Activated T-helper 1 cell treated with anti-CD3 and anti-CD28 coated beads, Interleukin-12 subunit alpha, Interleukin-12 subunit beta, Interleukin-2, Interleukin-4 antibody, amounts not matched to agents 30 ng/mL and 10 ng/mL and 1 ng/mL, durations not matched to agents 14 hours and 24 hours and 36 hours (primary cell): ENCODE measurements at regions of chr3 and their contacts with region 1.

Region 1: DNA sequence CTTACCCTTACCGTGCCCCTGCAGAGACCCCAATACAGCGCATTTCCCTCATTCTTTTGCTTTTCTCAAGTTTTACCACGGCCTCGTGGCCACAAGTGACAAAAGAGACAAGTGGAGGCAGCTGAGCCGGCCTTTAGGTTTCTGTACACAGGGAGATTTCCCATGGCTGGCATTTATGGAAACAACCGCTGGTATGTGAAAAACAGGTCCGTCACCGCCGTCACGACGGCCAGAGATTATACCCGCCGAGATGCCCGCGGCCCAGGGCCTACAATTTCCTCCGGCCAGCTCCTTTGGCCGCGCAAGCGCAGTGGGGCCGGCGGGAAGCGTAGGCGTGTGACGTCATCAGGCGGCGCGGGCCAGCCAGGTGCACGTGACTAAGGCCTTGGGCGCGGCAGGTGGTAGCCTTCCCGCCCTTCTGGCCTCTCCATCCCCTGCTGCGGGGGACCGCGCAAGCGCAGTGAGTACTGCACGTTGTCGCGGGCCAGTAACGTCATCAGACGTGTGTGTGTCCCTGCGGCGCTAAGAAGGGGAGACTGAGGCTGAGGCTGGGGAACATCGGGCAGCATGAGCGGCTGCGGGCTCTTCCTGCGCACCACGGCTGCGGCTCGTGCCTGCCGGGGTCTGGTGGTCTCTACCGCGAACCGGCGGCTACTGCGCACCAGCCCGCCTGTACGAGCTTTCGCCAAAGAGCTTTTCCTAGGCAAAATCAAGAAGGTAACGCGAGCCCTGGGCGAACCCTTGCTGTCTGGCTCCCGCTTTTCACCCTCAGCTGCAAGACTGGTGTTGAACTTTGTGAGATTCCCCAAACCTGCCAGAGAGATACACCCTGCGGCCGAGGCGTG is at the start of gene ACAD9:
- DNase-seq: peak; percentile 98
- H3K4me3 Mint-ChIP-seq: peak within 1 kb of the TSS; percentile 88
- H3K27ac Mint-ChIP-seq: peak within 1 kb of the TSS; percentile 92
- H3K4me1 Mint-ChIP-seq: peaks cover 71% of the 10 kb centered on the region
- H3K27me3 Mint-ChIP-seq: no peaks in the 10 kb centered on the region
- total RNA-seq, gene ACAD9: 65.3 and 67.2 TPM in 2 replicates

Region 2: DNA sequence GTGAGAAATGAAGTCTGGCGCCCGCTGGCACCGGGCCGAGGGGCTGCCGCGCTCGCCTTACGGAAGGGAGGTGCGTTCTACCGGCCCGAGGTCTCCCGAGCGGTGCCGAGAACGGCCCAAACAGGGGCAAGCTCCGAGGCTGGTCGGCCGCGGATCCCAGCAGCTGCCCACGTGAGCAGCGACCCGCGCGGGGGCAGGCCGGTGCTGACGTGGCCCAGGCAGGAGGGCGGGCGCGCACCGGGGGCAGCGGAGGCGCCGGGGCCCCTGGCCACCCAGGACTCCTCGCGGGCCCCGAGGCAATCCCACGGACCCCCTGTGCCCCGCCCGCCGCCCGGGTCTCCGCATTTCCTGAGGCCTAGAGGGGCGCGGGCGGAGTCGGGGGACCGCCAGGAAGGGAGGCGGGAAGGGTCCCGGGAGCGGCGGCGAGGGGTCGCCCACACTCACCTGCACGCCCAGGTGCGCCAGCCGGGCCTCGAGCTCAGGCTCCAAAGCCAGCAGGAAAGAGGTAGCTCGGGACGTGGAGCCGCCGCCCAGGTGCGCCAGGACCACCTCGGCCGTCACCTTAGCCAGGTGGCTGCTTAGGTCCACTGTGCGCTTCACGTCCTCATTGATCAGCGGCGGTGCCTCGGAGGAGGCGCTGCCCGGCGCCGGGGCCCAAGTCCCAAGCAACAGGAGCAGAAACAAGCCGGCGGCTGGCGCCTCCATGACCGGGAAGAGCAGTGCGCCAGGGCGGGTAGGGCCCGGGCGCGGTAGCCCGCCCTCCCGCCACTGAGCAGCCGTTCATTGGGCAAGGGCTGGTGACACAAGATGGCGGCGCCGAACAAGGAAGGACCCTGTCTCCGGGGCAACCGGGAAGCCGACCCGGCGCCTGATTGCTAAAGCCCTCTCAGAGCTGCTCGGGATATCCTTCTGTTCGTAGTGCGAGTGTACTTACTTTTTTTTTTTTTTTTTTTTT is 229.0 kb before region 1 on chr3 and contains the start of gene RPN1:
- intact Hi-C with region 1: loop called (anchors 1 kb)
- DNase-seq: peak; percentile 94
- H3K4me3 Mint-ChIP-seq: peak within 1 kb of the TSS; percentile 90
- H3K27ac Mint-ChIP-seq: peak within 1 kb of the TSS; percentile 92
- H3K4me1 Mint-ChIP-seq: peaks cover 26% of the 10 kb centered on the region
- H3K27me3 Mint-ChIP-seq: no peaks in the 10 kb centered on the region
- total RNA-seq, gene RPN1: 190 and 194 TPM in 2 replicates

Region 3: DNA sequence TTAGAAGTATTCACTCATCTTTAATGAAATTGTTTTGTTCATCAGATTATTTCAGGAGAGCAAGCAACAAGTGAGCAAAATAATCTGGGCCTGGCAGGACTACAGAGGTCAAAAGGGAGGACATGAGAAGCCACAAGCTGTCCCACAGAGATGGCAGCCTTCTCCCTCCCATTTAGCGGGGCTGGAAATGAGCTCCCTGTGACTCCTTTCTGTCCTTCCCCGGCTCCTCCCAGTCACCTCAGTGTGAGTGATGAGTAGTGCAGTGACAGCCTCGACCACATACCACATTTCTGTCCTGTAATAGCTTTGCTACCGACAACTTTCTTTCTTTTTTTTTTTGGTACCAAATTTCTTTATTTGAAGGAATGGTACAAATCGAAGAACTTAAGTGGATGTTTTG is 115.4 kb before region 1 on chr3:
- intact Hi-C with region 1: no loop called
- DNase-seq: no peak
- H3K4me3 Mint-ChIP-seq: no peak overlapping the region
- H3K27ac Mint-ChIP-seq: peak overlapping the region; percentile 18
- H3K4me1 Mint-ChIP-seq: peaks cover 44% of the 10 kb centered on the region
- H3K27me3 Mint-ChIP-seq: no peaks in the 10 kb centered on the region

Region 4: DNA sequence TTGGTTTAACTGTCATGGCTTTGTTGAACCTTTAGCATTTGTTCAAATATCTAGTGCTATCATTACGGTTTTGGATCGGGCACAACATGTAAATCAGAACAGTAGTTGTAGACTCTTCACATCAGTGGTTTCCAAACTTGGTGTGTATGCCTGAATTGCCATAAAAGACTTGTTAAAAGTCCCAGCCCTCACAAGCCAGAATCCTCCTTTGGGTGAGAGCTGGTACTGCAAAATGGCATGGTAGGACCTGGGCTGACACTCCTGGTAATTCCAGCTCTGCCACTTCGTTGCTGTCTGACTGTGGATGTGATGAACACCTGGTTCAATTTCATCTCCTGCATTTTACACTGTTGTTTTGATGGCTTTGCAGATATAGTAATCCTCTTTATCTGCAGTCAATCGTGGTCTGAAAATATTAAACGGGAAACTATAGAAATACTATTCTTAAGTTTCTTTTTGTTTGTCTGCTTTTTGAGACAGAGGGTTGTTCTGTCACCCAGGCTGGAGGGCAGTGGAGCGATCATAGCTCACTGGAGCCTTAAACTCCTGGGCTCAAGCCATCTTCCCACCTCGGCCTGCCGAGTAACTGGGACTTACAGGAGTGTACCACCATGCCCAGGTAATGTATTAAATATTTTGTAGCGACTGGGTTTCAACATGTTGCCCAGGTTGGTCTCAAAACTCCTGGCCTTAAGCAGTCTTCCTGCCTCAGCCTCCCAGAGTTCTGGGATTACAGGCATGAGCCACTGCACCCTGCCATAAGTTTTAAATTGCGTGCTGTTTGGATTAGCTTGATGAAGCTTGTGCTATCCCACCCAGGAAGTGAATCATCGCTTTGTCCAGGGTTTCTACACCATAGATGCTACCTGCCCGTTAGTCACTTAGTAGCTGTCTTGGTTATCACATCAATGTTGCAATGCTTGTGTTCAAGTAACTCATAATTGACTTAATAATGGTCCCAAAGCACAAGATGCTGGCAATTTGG is 91.8 kb before region 1 on chr3:
- intact Hi-C with region 1: loop called (anchors 1 kb)
- DNase-seq: no peak
- H3K4me3 Mint-ChIP-seq: peak overlapping the region; percentile 70
- H3K27ac Mint-ChIP-seq: peak overlapping the region; percentile 97
- H3K4me1 Mint-ChIP-seq: peaks cover 83% of the 10 kb centered on the region
- H3K27me3 Mint-ChIP-seq: no peaks in the 10 kb centered on the region

Region 5: DNA sequence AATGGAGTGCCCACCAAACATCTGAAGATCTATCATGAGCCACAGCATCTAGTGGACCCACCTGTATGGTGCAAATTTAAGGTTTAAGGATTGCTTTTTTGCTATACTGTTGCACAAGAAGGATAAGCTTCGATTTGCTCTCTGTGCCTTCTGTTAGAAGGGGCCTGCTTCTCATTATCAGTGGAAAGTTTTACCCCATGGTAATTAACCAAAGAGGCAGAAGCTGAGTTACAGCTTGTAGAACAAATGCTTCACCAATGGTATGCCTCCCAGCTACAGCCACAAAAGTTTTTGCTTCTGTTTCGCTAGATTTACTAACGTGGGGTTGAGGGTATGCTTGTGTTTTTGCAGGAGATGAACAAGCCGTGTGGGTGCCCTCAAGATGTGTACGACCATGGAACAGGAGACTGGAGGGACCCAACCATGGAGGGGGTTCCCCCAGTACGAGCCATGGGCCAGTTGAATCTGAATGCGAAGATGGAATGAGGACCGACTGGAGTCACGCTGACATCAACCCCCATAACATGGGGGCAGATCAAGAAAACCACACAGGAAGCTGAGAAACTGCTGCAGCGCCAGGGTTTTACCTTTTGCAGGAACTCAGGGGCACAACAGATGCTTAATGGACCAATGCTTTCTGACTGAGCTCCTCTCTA is 43.6 kb after region 1 on chr3:
- intact Hi-C with region 1: loop called (anchors 1 kb)
- DNase-seq: peak; percentile 46
- H3K4me3 Mint-ChIP-seq: peak overlapping the region; percentile 67
- H3K27ac Mint-ChIP-seq: peak overlapping the region; percentile 70
- H3K4me1 Mint-ChIP-seq: peaks cover 37% of the 10 kb centered on the region
- H3K27me3 Mint-ChIP-seq: peaks cover 4% of the 10 kb centered on the region

Region 6: DNA sequence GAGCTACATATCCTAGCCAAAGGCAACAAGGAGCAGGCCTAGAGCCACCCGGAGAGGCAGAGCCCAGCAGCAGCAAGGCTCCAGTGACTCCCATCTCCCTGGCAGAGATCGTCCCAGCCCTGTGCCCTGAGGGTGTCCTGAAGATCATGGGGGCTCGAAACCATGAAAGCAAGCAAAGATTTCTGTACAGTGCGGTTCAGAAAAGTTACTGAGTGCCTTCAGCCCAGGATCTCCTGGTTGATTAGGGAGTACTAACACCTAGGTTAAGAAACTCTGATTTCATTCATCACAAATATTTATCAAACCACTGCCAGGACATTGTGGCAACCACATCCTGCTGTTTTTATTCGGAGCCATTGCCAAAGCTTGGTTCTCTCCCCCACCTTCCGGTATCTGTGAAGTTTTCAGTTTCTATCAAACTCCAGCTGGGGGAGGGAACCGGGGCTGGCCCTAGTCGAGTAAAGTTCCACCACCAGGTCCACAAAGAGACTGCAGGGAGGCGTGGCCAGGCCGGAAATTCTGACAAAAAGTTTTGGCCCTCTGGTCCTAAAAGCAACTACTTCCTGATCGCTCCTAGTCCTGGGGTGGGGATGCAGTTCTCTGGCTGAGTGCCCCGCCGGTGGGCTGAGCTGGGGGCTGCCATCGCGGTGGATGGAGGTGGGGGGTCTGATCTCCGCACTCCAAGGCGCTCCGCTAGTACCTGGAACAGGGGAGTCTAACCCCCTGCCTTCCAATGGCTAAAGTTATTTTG is 241.1 kb after region 1 on chr3:
- intact Hi-C with region 1: loop called (anchors 5 kb)
- DNase-seq: peak; percentile 90
- H3K4me3 Mint-ChIP-seq: peak overlapping the region; percentile 94
- H3K27ac Mint-ChIP-seq: peak overlapping the region; percentile 99
- H3K4me1 Mint-ChIP-seq: peaks cover 61% of the 10 kb centered on the region
- H3K27me3 Mint-ChIP-seq: no peaks in the 10 kb centered on the region

Region 7: GRCh38 chr3:129249276-129250065 is 370.1 kb after region 1 on chr3 and contains the start of gene COPG1:
- intact Hi-C with region 1: loop called (anchors 1 kb)
- DNase-seq: peak; percentile 88
- H3K4me3 Mint-ChIP-seq: peak within 1 kb of the TSS; percentile 98
- H3K27ac Mint-ChIP-seq: peak within 1 kb of the TSS; percentile 98
- H3K4me1 Mint-ChIP-seq: peaks cover 61% of the 10 kb centered on the region
- H3K27me3 Mint-ChIP-seq: no peaks in the 10 kb centered on the region
- total RNA-seq, gene COPG1: 157 and 160 TPM in 2 replicates

Region 8: GRCh38 chr3:129399145-129399894 is 520.0 kb after region 1 on chr3:
- intact Hi-C with region 1: loop called (anchors 1 kb)
- DNase-seq: peak; percentile 73
- H3K4me3 Mint-ChIP-seq: peak overlapping the region; percentile 96
- H3K27ac Mint-ChIP-seq: peak overlapping the region; percentile 94
- H3K4me1 Mint-ChIP-seq: peaks cover 23% of the 10 kb centered on the region
- H3K27me3 Mint-ChIP-seq: no peaks in the 10 kb centered on the region